ENCODE measurements at regions of chr18 and their contacts with region 1.

Region 1: GRCh38 chr18:41974796-41975201 is 19.8 kb downstream of the PIK3C3 start:
- DNase-seq: peak; percentile 39
- H3K4me3 Mint-ChIP-seq: no peak overlapping the region
- H3K27ac Mint-ChIP-seq: no peak overlapping the region
- H3K4me1 Mint-ChIP-seq: peaks cover 54% of the 10 kb centered on the region
- H3K27me3 Mint-ChIP-seq: no peaks in the 10 kb centered on the region

Region 2: GRCh38 chr18:42011053-42011452 is 36.3 kb after region 1 on chr18:
- CTCF ChIA-PET with region 1: no interaction called
- intact Hi-C with region 1: loop called (anchors 2 kb)
- DNase-seq: no peak
- H3K4me3 Mint-ChIP-seq: no peak overlapping the region
- H3K27ac Mint-ChIP-seq: peak overlapping the region; percentile 41
- H3K4me1 Mint-ChIP-seq: peaks cover 15% of the 10 kb centered on the region
- H3K27me3 Mint-ChIP-seq: no peaks in the 10 kb centered on the region